ENCODE measurements at regions of chr5 and their contacts with region 1.

Region 1: DNA sequence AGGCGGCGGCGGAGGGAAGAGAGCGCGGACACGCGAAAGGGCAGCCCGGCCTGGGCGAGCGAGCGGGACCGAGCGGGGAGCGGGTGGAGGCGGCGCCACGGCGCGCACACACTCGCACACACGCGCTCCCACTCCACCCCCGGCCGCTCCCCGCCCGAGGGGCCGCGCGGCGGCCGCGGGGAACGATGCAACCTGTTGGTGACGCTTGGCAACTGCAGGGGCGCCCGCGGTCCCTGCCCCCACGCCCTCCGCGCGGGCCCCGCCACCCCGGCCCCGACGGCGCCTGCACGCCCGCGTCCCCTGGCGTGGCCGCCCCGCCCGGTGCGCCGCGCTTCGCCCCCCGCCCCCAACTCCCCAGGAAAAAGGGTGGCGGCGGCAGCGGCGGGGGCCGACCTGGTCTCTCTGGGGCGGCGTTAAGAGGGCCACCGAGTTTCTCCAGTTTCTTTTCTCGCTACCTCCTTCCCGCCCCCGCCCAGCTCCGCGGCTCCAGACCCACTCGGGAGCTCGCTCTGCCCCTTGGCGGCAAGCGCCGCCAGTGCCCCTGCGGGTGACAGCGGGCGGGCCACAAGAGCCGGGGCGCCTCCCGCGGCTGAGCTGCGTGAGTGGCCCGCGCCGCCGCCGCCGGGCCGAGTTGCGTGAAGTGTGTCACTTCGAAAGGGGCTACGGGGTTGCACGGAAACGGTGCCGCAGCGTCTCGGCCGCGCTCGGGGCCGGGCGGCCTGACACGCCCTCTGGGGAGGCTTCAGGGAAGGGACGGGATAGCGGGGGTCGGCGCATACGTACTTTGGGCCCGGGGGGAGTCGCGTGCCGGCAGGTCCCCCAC is at the start of gene NR3C1:
- DNase-seq: peak; percentile 83
- H3K4me3 ChIP-seq: peak within 1 kb of the TSS; percentile 78 to 94 (median 83)
- H3K27ac ChIP-seq: peak within 1 kb of the TSS; percentile 97
- H3K4me1 ChIP-seq: peaks cover 11% of the 10 kb centered on the region
- H3K27me3 ChIP-seq: no peaks in the 10 kb centered on the region
- CTCF ChIP-seq: peak; percentile 10 to 42
- total RNA-seq, gene NR3C1: 62.8 to 64.4 TPM

Region 2: GRCh38 chr5:142931896-142932686 is 471.7 kb before region 1 on chr5:
- CTCF ChIA-PET with region 1: interaction called, 21 read pairs
- dilution Hi-C with region 1: no loop called
- in situ Hi-C with region 1: no loop called
- intact Hi-C with region 1: no loop called
- DNase-seq: no peak
- H3K4me3 ChIP-seq: no peak overlapping the region
- H3K27ac ChIP-seq: no peak overlapping the region
- H3K4me1 ChIP-seq: no peaks in the 10 kb centered on the region
- H3K27me3 ChIP-seq: no peaks in the 10 kb centered on the region
- CTCF ChIP-seq: no peak

Region 3: DNA sequence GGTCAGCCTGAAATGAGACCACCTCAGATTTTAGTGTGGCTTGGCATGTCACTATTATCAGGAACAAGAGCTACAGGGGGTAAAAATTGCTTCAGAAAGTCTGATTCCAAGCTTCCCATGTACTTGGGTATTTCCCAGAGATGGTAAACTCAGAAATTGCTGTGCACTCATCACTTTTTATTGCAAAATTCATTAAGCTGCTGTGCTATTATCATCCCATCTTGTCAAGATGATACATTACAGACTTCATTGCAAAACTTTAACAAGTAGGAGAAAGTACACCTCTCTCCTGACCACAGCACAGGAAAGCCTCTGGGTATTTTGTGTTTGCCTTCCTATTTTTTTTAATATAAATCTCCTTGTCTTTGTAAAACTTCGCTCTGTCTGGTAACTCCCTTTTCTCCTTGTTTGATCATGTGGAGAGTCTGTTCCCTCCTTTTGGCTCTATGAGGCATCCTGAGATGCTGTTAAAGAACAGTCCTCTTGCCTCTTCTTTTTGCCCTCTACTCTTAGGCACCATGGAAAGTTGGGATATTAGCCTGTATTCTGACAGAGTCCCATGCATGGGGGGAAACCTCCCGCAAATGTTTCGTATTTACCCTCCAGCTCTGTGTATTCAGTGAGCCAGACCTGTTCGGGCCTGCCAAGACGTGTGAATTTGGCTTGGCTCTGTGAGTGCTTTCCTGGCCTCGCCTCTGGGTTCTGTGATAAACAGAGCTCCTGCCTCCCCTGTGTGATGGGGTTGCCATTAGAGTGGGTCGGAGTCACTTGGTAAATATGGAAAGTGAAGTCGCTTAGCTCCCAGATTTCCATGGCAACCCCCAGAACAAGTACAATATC is 261.0 kb before region 1 on chr5:
- CTCF ChIA-PET with region 1: no interaction called
- dilution Hi-C with region 1: no loop called
- in situ Hi-C with region 1: no loop called
- intact Hi-C with region 1: no loop called
- DNase-seq: peak; percentile 93
- H3K4me3 ChIP-seq: peak overlapping the region in 2 of 3 experiments; percentile 10 to 17
- H3K27ac ChIP-seq: peak overlapping the region; percentile 98
- H3K4me1 ChIP-seq: peaks cover 39% of the 10 kb centered on the region
- H3K27me3 ChIP-seq: no peaks in the 10 kb centered on the region
- CTCF ChIP-seq: no peak

Region 4: DNA sequence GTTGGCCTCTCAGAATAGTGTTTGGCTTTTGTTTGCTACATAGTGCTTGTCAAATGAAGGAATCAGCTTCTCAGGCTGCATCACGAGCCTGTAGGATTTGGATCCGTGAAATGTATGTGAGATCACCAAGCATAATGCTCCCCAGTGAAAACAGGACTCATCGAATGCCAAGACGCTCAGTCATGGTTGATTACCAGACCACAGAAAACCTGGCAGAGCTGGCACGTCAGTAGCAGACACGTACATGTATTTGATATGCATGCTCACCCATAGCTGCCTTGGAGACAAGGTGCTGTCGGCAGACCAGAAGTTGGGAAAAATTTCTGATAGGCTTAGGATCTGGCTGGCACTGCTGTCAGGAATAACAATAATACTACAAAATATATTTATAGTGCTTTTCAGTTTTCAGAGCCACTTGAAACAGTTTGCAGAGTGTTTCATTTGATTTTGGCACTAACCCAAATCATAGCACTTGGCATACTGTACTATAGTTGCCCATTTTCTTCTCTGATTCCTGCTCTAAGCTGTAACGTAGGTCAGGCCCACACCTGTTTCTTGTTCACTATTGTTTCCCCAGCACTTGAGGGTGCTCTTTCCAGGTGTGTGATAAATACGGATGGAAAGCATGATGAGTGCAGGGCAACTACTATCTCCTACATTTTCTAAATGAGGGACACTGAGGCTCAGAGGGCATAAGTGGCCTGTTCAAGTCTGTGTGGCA is 226.4 kb before region 1 on chr5:
- CTCF ChIA-PET with region 1: interaction called, 8 read pairs
- dilution Hi-C with region 1: no loop called
- in situ Hi-C with region 1: loop called in 1 of 2 experiments (anchors 25 kb)
- intact Hi-C with region 1: loop called (anchors 1 kb)
- DNase-seq: peak; percentile 100
- H3K4me3 ChIP-seq: no peak overlapping the region
- H3K27ac ChIP-seq: peak overlapping the region; percentile 97
- H3K4me1 ChIP-seq: peaks cover 29% of the 10 kb centered on the region
- H3K27me3 ChIP-seq: no peaks in the 10 kb centered on the region
- CTCF ChIP-seq: peak; percentile 23 to 30

Region 5: GRCh38 chr5:143376911-143377813 is 26.6 kb before region 1 on chr5:
- CTCF ChIA-PET with region 1: no interaction called
- dilution Hi-C with region 1: no loop called
- in situ Hi-C with region 1: no loop called
- intact Hi-C with region 1: no loop called
- DNase-seq: peak; percentile 77
- H3K4me3 ChIP-seq: no peak overlapping the region
- H3K27ac ChIP-seq: peak overlapping the region; percentile 52
- H3K4me1 ChIP-seq: peaks cover 27% of the 10 kb centered on the region
- H3K27me3 ChIP-seq: no peaks in the 10 kb centered on the region
- CTCF ChIP-seq: no peak

Region 6: GRCh38 chr5:143506881-143507551 is 103.2 kb after region 1 on chr5:
- CTCF ChIA-PET with region 1: interaction called, 3 read pairs
- dilution Hi-C with region 1: no loop called
- in situ Hi-C with region 1: no loop called
- intact Hi-C with region 1: loop called (anchors 2 kb)
- DNase-seq: peak; percentile 90
- H3K4me3 ChIP-seq: no peak overlapping the region
- H3K27ac ChIP-seq: peak overlapping the region; percentile 15
- H3K4me1 ChIP-seq: peaks cover 18% of the 10 kb centered on the region
- H3K27me3 ChIP-seq: no peaks in the 10 kb centered on the region
- CTCF ChIP-seq: peak in 1 of 2 donors; percentile 49

Region 7: DNA sequence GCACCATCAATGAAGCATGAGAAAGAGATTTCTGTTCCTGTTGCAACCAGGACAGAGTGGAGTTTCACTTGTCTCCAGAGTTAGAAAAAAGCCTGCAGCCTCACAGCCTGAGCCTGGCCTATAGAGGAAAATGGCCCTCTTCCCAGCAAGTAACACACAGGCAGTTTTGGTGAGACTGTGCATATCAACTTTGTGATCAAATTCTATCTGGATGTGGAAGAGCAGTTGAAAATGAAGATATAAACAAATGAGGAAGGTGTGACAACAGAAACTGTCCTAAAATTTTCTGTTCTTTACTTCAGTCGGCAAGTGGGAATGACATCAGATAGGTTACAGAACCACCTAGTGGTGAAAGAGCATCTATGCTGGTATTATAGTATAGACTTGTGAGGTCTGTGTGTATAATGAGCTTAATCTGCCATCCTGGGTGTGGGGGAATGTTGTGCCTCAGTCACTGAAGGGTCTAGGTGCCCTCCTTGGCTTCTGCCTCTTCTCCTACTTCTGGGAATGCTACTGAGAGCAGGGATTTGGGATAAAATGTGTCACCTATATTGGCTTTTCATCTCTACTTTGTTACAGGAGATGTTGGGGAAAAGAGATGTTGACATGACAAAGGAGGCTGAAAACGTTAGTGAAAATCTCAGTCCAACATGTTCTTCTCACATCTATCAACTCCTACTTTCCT is 738.5 kb after region 1 on chr5:
- CTCF ChIA-PET with region 1: no interaction called
- dilution Hi-C with region 1: no loop called
- in situ Hi-C with region 1: loop called in 1 of 2 experiments (anchors 25 kb)
- intact Hi-C with region 1: loop called (anchors 2 kb)
- DNase-seq: peak; percentile 48
- H3K4me3 ChIP-seq: no peak overlapping the region
- H3K27ac ChIP-seq: no peak overlapping the region
- H3K4me1 ChIP-seq: peaks cover 4% of the 10 kb centered on the region
- H3K27me3 ChIP-seq: no peaks in the 10 kb centered on the region
- CTCF ChIP-seq: peak; percentile 67 to 80

Measured in mammary epithelial cell (primary cell).